ENCODE measurements at regions of chr6 and their contacts with region 1.

Region 1: GRCh38 chr6:139375232-139376016 is 976 bp upstream of the CITED2 start:
- DNase-seq: peak; percentile 92 to 96
- ATAC-seq: peak; percentile 76

Region 2: GRCh38 chr6:139597771-139598755 is 222.6 kb after region 1 on chr6:
- intact Hi-C with region 1: loop called in 1 of 2 experiments (anchors 10 kb)
- DNase-seq: peak; percentile 78 to 86
- ATAC-seq: peak; percentile 94

Region 3: DNA sequence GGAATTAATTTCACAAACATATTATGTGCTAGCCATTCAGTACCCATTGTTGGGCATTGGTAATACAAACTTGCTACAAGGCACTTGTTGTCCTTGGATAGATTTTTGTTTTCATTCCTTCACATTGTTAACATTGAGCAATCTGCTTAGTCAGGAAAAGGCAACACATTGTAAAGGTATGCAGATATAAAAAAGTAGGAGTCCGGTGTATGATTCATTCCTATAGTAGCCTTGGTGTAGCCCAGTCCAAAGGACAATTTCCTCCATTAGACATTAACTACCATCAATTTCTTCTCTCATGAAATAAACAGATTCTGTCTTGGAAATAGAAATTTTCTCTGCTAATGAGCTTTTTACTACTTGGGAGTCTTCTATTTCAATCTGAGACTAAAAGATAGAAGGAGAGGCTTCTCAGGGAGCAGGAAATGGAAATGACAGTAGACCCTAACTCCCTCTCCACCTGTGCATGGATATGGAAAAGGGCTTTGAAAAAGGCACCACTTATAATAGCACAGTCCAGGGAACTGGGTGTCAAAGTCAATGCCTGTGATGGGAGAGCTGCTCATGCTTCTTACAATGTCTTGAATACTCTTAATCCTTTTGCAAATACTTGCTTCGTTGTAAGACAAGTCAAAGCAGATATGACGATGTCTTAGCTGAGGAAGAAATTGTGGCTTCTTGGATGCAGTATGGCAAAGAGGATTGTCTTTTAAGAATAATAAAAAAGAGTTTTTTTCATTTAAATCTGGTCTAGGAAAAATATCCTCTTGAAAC is 368.4 kb after region 1 on chr6:
- intact Hi-C with region 1: no loop called
- DNase-seq: no peak
- ATAC-seq: peak; percentile 95

Region 4: GRCh38 chr6:139852488-139853140 is 477.2 kb after region 1 on chr6:
- intact Hi-C with region 1: loop called in 1 of 2 experiments (anchors 10 kb)
- DNase-seq: peak; percentile 9 to 51
- ATAC-seq: peak; percentile 90